ENCODE measurements at regions of chr13 and their contacts with region 1.

Region 1: DNA sequence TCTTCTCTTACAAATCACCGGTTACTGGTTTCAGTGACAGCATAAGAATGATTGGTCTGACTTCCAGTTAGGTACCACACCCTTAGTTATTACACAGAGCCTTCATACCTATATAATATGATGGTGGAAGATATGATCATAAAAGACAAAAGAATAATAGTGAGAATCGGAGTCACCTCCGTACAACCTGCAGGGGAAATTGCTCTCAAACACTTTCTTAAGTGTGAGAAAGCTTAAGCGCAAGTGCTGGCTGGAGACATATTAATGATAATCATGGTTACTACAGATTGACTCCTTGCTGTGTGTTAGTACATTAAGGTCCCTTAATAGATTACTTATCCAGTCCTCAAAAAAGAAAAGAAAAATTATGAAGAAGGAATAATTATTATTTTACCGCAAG is 1.8 kb upstream of the LHFPL6 start:
- DNase-seq: no peak
- H3K4me3 ChIP-seq: no peak overlapping the region
- H3K27ac ChIP-seq: no peak overlapping the region
- H3K4me1 ChIP-seq: peaks cover 0 to 29% (median 5%) of the 10 kb centered on the region in 4 donors
- H3K27me3 ChIP-seq: no peaks in the 10 kb centered on the region
- CTCF ChIP-seq: no peak

Region 2: DNA sequence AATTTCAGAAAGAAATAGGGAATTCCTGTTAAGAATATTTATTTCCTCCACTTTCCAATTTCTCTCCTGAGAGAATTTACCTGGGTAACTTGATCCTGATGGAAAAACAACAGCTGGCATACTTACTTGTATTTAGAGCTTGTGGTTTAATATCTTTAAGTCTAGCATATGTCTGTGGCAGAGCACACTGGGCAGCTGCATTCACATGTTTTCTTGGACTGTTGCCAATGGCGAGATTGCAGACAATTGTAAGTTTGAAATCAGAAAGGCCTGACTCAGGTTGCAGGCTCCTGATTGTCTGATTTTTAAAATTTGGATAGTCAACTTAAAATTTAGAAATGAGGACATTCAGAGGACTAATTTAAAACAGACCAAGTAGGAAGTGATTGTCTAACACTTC is 499.6 kb before region 1 on chr13:
- intact Hi-C with region 1: no loop called
- DNase-seq: no peak
- H3K4me3 ChIP-seq: no peak overlapping the region
- H3K27ac ChIP-seq: no peak overlapping the region
- H3K4me1 ChIP-seq: no peaks in the 10 kb centered on the region
- H3K27me3 ChIP-seq: no peaks in the 10 kb centered on the region
- CTCF ChIP-seq: no peak

Region 3: DNA sequence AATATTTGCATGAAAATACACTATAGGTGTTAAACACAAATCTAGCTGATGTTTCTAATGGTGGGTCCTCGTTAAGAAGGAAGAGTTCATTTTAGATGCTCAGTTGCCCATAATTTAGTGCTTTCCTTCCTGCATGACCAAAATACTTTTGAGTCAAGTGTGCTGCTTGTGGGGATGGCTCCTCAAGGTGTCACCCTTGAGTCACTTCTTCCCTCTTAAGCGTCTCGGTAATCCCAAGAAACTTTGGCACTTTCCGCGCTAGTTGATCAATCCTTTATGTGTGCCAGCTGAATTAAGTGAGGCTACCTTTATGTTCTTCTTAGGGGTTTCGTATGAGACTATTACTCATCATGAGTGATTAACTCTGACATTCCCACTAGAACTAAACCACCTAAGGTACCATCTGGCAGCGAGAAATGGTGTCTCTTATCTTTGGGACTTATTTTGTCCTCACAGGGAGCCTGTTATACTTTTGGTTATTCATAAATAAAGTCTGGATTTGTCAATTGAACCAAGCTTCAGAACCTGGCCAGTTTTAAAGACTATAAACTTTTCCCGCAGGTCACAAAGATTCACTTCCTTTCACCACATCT is 459.7 kb before region 1 on chr13:
- intact Hi-C with region 1: loop called (anchors 5 kb)
- DNase-seq: peak; percentile 60 to 74
- H3K4me3 ChIP-seq: peak overlapping the region; percentile 3 to 29
- H3K27ac ChIP-seq: peak overlapping the region in 1 of 2 donors; percentile 1
- H3K4me1 ChIP-seq: peaks cover 0 to 8% (median 1%) of the 10 kb centered on the region in 4 donors
- H3K27me3 ChIP-seq: no peaks in the 10 kb centered on the region
- CTCF ChIP-seq: peak; percentile 81 to 84

Region 4: DNA sequence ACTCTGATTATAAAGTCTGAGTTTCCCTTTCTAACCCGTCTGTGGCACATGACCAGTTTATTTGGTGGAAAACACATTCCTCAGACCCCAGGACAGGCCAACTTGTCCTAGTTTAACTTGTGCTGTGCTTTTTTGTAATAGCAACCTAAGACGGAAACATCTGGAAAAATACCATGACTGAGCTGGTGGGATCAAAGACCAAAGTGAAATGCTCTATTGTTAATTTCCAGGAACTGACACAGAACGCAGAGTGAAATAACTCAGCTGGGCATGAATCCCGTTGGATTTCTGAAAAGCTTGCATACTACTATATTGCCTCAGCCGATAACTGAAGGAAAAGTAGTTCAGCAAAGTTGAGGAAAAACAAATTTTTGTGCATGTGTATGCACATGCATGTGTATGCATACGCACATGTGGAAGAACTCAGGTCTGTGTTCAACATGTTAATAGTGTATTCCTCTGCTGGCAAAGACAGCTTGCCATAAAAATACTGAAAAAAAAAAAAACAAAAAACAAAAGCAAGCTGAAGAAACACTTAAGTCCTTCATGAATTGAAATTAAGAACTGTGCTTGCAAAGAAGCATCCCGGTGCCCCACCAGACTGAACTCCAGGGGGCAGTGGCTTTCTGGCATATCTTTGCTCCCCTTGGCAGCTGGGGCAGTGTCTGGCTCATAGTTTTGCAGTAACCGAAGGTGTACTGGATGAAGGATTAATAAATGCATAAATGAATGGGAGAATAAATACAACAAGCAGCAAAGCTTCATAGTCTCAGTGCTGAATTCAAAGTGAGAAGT is 189.6 kb before region 1 on chr13:
- intact Hi-C with region 1: loop called (anchors 5 kb)
- DNase-seq: peak; percentile 45 to 68
- H3K4me3 ChIP-seq: peak overlapping the region in 1 of 2 donors; percentile 2
- H3K27ac ChIP-seq: peak overlapping the region; percentile 39 to 51
- H3K4me1 ChIP-seq: peaks cover 0 to 70% (median 14%) of the 10 kb centered on the region in 4 donors
- H3K27me3 ChIP-seq: no peaks in the 10 kb centered on the region
- CTCF ChIP-seq: peak; percentile 28 to 39

Measured in tibial artery (tissue), 4 donors.